ENCODE measurements at regions of chr6 and their contacts with region 1.

Region 1: DNA sequence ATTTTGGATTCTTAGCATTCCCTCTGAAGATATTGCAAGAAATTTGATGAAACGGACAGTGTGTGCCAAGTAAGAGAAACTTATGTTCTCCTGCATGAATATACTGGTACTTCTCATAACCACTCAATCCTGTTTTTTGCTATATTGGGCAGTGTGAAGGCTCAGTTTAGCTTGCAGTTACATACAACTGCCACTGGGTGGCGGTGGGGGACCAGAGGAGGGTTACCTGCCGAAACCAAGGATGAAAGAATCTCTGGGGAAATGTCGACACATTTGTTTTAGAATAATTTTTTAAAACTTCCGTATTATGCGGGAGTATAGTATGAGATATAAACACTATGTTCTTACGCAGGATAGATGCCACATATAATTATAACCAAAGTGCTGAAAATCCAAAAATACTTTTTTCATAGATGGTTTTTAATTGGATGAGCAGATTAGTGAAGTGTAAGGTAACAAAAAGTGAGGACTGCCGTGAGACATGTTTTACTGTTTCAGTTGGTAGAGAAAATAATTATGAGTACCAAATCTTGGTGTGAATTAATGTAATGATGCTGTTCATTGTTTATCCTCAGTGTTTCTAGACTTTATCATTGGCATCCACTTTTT is 9.7 kb downstream of the TRMT11 start:
- DNase-seq: peak; percentile 51 to 78 (median 72)
- ATAC-seq: peak; percentile 99
- H3K4me3 ChIP-seq: peak overlapping the region; percentile 42
- H3K4me3 Mint-ChIP-seq: peak overlapping the region; percentile 66 to 87 (median 77)
- H3K27ac ChIP-seq: no peak overlapping the region
- H3K27ac Mint-ChIP-seq: peak overlapping the region in 6 of 9 donors; percentile 8 to 63 (median 24)
- H3K4me1 ChIP-seq: no peaks in the 10 kb centered on the region
- H3K4me1 Mint-ChIP-seq: peaks cover 10 to 44% (median 41%) of the 10 kb centered on the region in 7 donors
- H3K27me3 ChIP-seq: no peaks in the 10 kb centered on the region
- H3K27me3 Mint-ChIP-seq: no peaks in the 10 kb centered on the region

Region 2: DNA sequence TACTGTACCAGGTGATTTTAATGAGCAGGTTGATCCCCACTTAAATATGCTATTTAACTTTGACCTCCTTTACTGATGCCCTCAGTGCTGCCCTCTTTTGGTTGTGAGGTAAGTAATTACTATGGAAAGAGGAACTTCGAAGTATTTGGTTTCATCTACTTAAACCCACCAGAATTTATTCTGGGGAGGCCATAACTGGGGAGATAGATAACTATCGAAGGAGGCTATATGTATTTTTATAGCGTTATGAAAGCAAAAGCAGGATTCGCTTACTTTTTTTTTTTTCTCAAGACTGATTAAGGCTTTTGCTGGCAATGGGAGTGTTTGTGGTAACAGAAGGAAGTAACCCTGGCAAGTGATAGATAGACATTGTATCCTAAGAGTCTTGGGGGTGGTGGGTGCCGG is 174.9 kb after region 1 on chr6:
- CTCF ChIA-PET with region 1: no interaction called
- POLR2A ChIA-PET with region 1: no interaction called
- intact Hi-C with region 1: loop called (anchors 1 kb)
- DNase-seq: peak in 5 of 9 donors; percentile 3 to 11 (median 8)
- ATAC-seq: peak; percentile 67
- H3K4me3 ChIP-seq: no peak overlapping the region
- H3K4me3 Mint-ChIP-seq: peak overlapping the region in 5 of 10 donors; percentile 4 to 65 (median 9)
- H3K27ac ChIP-seq: no peak overlapping the region
- H3K27ac Mint-ChIP-seq: no peak overlapping the region
- H3K4me1 ChIP-seq: peaks cover 0 to 4% of the 10 kb centered on the region in 2 donors
- H3K4me1 Mint-ChIP-seq: peaks cover 0 to 8% (median 5%) of the 10 kb centered on the region in 7 donors
- H3K27me3 ChIP-seq: no peaks in the 10 kb centered on the region
- H3K27me3 Mint-ChIP-seq: peaks cover 0 to 2% (median 0%) of the 10 kb centered on the region in 5 donors

Region 3: GRCh38 chr6:126422912-126423311 is 426.8 kb after region 1 on chr6:
- CTCF ChIA-PET with region 1: no interaction called
- POLR2A ChIA-PET with region 1: no interaction called
- intact Hi-C with region 1: loop called in 1 of 2 experiments (anchors 10 kb)
- DNase-seq: no peak
- ATAC-seq: no peak
- H3K4me3 ChIP-seq: no peak overlapping the region
- H3K4me3 Mint-ChIP-seq: no peak overlapping the region
- H3K27ac ChIP-seq: no peak overlapping the region
- H3K27ac Mint-ChIP-seq: no peak overlapping the region
- H3K4me1 ChIP-seq: no peaks in the 10 kb centered on the region
- H3K4me1 Mint-ChIP-seq: no peaks in the 10 kb centered on the region
- H3K27me3 ChIP-seq: no peaks in the 10 kb centered on the region
- H3K27me3 Mint-ChIP-seq: peaks cover 0 to 4% (median 0%) of the 10 kb centered on the region in 5 donors

Region 4: DNA sequence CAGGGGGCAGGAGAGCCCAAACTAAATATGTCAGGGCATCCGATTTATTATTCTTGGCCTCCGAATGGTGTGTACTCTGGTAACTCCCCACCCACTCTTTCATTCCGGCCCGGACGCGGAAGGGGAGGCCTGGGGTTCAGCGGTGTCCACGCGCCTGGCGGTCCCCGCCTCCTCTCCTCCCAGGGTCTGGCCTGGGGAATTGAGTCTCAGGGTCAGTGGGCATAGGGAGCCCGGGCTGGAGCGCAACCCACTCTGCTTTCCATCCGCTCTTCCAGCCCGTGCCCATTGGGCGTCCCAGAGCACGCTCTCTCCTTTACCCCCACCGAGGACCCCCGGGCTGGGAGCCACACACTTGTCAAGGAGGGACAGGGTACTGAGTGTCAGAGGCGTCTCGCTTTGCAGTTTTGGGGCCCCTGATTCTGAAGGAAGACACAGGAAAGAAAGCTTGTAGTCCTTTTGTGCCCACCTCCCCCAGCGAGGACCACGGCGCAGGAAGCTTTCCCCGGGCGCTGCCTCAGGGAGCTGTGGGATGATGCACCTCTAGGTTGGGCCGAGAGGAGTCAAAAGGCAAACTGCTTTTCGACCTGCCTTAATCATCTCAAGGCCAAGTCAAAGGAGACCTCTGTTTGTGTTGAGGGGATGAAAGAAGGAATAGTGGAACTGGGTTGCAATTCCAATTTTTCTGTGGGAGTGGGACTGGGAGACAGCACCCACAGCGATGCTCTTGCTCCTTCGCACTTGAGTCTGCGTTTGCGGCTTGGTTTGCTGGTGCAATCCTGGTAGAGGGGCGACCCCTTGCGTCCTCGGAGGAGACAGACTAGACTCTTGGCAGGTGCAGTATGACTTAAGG is 1124.9 kb after region 1 on chr6:
- CTCF ChIA-PET with region 1: no interaction called
- POLR2A ChIA-PET with region 1: no interaction called
- intact Hi-C with region 1: loop called in 1 of 2 experiments (anchors 1 kb)
- DNase-seq: peak in 7 of 9 donors; percentile 13 to 72 (median 38)
- ATAC-seq: peak; percentile 80
- H3K4me3 ChIP-seq: no peak overlapping the region
- H3K4me3 Mint-ChIP-seq: peak overlapping the region; percentile 7 to 86 (median 54)
- H3K27ac ChIP-seq: no peak overlapping the region
- H3K27ac Mint-ChIP-seq: no peak overlapping the region
- H3K4me1 ChIP-seq: no peaks in the 10 kb centered on the region
- H3K4me1 Mint-ChIP-seq: peaks cover 16 to 32% (median 20%) of the 10 kb centered on the region in 7 donors
- H3K27me3 ChIP-seq: peaks cover 4 to 15% of the 10 kb centered on the region in 2 donors
- H3K27me3 Mint-ChIP-seq: peaks cover 63 to 76% (median 69%) of the 10 kb centered on the region in 5 donors

Region 5: GRCh38 chr6:127342946-127343808 is 1347.1 kb after region 1 on chr6 and contains the start of gene ECHDC1:
- CTCF ChIA-PET with region 1: no interaction called
- POLR2A ChIA-PET with region 1: no interaction called
- intact Hi-C with region 1: loop called in 1 of 2 experiments (anchors 5 kb)
- DNase-seq: peak; percentile 45 to 76 (median 70)
- ATAC-seq: peak; percentile 87
- H3K4me3 ChIP-seq: peak within 1 kb of the TSS; percentile 83
- H3K4me3 Mint-ChIP-seq: no peak within 1 kb of the TSS
- H3K27ac ChIP-seq: peak within 1 kb of the TSS; percentile 91
- H3K27ac Mint-ChIP-seq: no peak within 1 kb of the TSS
- H3K4me1 ChIP-seq: peaks cover 34 to 39% of the 10 kb centered on the region in 2 donors
- H3K4me1 Mint-ChIP-seq: peaks cover 0 to 12% (median 9%) of the 10 kb centered on the region in 7 donors
- H3K27me3 ChIP-seq: no peaks in the 10 kb centered on the region
- H3K27me3 Mint-ChIP-seq: no peaks in the 10 kb centered on the region
- total RNA-seq, gene ECHDC1: 18.1 to 46.5 (median 34.3) TPM

Region 6: DNA sequence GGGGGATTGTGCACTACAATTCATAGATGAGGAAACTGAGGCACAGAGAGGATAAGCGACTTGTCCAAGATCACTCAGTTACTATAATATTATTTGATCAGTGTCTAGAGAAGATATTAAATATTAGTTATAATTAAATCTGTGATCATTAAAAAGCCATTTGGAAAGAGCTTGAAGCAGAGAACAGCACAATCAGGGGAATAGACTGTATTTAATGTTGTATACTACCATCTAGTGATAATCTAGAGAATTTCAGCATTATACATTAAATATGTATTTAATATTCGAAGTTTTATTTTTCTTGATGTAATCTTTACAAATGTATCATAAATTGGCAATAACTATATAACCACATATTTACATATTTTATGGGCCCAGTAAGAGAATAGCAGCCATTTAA is 1543.2 kb after region 1 on chr6:
- CTCF ChIA-PET with region 1: no interaction called
- POLR2A ChIA-PET with region 1: no interaction called
- intact Hi-C with region 1: loop called in 1 of 2 experiments (anchors 1 kb)
- DNase-seq: peak in 3 of 9 donors; percentile 18 to 30 (median 22)
- ATAC-seq: peak; percentile 65
- H3K4me3 ChIP-seq: no peak overlapping the region
- H3K4me3 Mint-ChIP-seq: no peak overlapping the region
- H3K27ac ChIP-seq: no peak overlapping the region
- H3K27ac Mint-ChIP-seq: no peak overlapping the region
- H3K4me1 ChIP-seq: no peaks in the 10 kb centered on the region
- H3K4me1 Mint-ChIP-seq: peaks cover 0 to 3% (median 0%) of the 10 kb centered on the region in 7 donors
- H3K27me3 ChIP-seq: no peaks in the 10 kb centered on the region
- H3K27me3 Mint-ChIP-seq: peaks cover 12 to 30% (median 18%) of the 10 kb centered on the region in 5 donors